Activated B cell treated with CpG ODN at 0.5 μM for 24 hours (primary cell): ENCODE measurements at regions of chr4 and their contacts with region 1.

Region 1: DNA sequence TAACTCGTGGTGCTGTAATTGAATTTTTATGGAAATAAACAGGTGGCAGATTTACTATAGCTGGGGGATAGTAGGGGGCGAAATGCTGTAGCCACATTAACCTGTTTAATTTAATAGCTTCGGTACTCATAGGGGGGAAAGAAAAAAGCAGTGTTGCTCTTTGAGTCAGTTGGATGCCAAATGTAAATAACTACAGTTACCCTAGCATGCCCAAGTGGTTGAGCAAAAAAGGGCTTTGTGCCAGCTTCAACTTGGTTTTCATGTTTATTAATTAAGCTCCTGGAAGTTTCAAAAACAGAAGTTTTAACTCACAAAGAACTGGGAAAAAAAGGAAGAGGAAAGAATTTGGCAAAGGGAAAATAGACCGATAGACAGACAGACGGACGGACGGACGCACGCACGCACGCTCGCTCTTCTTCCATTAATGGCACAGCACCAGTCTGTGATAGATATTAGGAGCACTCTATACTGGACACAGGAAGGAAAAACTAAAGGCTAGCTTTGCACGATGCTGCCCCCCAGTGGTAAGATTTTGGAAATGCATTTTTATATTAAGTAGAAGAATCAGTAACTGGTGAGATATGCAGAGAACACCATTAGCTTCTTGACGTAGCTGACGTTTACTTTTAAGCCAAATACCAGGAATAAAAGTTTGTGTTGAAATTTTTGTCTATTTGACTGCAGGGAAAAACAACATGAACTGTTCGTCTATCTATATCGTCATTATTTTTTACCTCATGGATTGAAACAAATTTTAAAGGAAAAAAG is 151.8 kb downstream of the SLC7A11 start:
- DNase-seq: no peak
- ATAC-seq: peak; percentile 61
- H3K4me3 Mint-ChIP-seq: no peak overlapping the region
- H3K27ac Mint-ChIP-seq: no peak overlapping the region
- H3K4me1 Mint-ChIP-seq: no peaks in the 10 kb centered on the region
- H3K27me3 Mint-ChIP-seq: peaks cover 9% of the 10 kb centered on the region
- CTCF ChIP-seq: peak; percentile 25

Region 2: GRCh38 chr4:138078751-138079520 is 11.4 kb before region 1 on chr4:
- CTCF ChIA-PET with region 1: interaction called, 12 read pairs
- POLR2A ChIA-PET with region 1: no interaction called
- intact Hi-C with region 1: no loop called
- DNase-seq: no peak
- ATAC-seq: no peak
- H3K4me3 Mint-ChIP-seq: no peak overlapping the region
- H3K27ac Mint-ChIP-seq: no peak overlapping the region
- H3K4me1 Mint-ChIP-seq: no peaks in the 10 kb centered on the region
- H3K27me3 Mint-ChIP-seq: peaks cover 3% of the 10 kb centered on the region
- CTCF ChIP-seq: no peak

Region 3: DNA sequence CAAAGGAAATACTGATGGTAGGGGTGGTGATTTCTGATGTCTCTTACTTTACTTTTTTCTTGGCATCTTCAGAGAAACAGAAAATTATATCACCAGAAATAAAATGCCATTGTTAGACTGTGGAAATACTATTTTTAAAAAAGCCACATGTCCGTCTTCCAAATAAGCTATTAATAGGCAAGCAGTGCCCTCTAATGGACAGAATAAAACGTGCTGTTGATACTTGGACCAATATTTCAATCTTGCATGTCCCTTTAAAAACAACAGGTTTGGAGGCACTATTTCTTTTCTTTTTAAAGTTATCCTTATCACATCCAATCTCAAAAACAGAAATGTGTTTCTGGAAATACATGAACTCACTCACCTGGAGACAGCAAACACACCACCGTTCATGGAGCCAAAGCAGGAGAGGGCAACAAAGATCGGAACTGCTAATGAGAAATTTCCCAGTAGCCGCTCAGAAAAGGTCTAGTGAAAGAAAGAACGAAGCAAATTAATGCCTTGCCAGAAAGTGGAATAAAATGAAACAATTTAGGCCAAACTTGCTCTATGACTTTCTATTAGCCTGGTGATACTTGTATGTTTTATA is 92.6 kb after region 1 on chr4:
- CTCF ChIA-PET with region 1: interaction called, 12 read pairs
- POLR2A ChIA-PET with region 1: no interaction called
- intact Hi-C with region 1: loop called (anchors 2 kb)
- DNase-seq: no peak
- ATAC-seq: peak; percentile 28
- H3K4me3 Mint-ChIP-seq: no peak overlapping the region
- H3K27ac Mint-ChIP-seq: no peak overlapping the region
- H3K4me1 Mint-ChIP-seq: no peaks in the 10 kb centered on the region
- H3K27me3 Mint-ChIP-seq: peaks cover 3% of the 10 kb centered on the region
- CTCF ChIP-seq: no peak

Region 4: DNA sequence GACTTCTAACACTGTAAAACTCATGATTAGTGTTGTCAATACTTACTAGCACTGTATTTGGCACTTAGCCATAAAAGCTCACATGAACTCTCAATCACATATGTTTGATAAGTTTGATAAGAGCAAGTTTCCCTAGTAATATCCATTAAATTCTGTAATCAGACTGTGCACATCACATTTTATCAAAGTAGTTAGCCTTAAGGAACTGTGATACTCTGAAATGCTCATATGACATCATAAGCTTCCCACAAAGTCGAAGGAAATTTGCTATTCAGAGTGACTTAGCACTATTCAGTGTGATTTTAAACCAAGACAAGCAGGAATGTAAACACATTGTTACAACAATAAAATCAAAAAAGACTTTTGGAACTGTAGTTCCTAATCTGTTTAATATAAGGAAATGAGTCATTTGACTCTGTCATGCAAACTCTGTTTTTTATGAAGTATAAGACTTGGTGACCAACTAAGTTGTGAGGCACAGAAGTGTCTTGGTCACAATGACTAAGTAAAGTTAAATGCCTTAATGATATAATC is 145.2 kb after region 1 on chr4:
- CTCF ChIA-PET with region 1: no interaction called
- POLR2A ChIA-PET with region 1: no interaction called
- intact Hi-C with region 1: no loop called
- DNase-seq: no peak
- ATAC-seq: no peak
- H3K4me3 Mint-ChIP-seq: no peak overlapping the region
- H3K27ac Mint-ChIP-seq: no peak overlapping the region
- H3K4me1 Mint-ChIP-seq: no peaks in the 10 kb centered on the region
- H3K27me3 Mint-ChIP-seq: peaks cover 2% of the 10 kb centered on the region
- CTCF ChIP-seq: no peak

Region 5: DNA sequence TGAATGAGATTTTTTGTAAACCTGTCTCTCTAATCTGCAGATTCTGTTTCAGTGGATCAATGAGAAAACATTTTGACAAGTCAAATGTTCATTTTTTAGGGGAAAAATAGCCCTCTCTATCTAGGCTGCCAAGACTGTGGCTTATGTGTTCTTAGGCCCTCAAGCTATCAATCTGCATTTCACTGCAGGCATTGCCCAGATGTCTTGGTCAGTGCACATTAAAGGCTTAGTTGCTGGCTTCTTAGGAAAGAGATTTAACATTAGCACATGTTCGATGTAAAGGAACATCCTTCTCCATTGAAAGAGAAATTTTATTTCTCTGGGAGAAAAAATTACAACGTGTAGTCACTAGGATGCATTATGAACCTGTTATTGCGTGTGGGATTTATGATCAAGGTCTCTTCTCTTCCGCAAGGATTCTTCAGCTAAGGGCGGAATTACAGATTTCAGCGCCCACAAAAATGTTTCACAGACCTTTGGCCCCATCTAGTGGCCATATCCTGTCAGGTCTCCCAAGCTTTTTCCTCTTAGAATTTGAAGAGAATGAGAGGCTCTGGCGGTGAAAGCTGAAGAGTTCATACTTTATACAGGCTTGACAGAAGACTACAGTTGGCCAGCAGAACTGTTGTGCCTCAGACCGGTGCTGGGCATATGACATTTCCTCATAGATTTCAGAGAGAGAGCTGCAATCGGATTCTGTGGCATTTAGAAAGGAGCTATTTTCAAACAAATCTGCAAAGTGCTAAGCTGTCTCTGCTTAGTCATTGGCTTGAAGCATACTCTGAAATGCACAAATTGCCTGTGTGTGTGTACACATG is 780.6 kb after region 1 on chr4:
- CTCF ChIA-PET with region 1: no interaction called
- POLR2A ChIA-PET with region 1: no interaction called
- intact Hi-C with region 1: loop called (anchors 10 kb)
- DNase-seq: no peak
- ATAC-seq: no peak
- H3K4me3 Mint-ChIP-seq: no peak overlapping the region
- H3K27ac Mint-ChIP-seq: no peak overlapping the region
- H3K4me1 Mint-ChIP-seq: peaks cover 2% of the 10 kb centered on the region
- H3K27me3 Mint-ChIP-seq: peaks cover 20% of the 10 kb centered on the region
- CTCF ChIP-seq: peak; percentile 89